Mammary epithelial cell (primary cell): ENCODE measurements at regions of chr20 and their contacts with region 1.

Region 1: DNA sequence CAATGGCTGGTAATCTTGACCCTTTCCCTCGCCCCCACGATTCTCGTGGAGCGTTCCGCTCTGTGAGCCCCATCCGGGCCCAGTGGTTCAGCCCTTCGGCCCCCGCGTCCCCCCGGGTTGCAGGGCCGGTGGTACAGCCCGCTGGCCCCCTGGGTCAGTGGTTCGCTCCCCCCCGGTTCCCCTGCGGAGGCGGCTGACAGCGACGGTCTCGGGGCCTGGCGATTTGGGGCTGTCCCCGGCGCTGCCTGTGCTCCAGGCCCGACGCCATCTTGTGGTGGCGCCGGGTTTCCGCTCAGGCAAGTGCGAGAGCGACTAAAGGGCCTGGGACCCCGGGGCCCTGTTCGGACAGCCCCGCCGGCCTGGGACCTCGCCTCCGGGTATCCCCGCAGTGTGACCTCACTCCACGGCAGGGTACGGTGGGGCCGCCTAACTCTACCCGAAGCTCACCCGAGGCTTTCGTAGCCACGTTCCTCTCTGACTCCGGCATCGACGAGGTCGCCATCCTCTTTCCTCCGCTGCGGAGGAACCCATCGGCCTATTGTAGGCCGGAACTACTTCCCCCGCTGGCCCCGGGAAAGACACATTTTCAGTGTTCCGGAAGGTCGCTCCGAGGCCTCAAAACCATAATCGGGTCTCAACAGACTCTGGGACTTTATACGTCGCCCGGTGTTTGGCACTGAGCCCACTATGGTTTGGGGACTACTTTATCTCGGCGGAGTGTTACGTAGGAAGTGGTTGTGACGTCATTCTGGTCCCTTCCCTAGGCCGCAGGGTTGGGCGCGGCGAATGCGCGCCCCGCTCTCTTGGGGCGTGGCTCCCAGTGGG is at the start of gene ZNF335:
- DNase-seq: peak; percentile 97
- H3K4me3 ChIP-seq: peak within 1 kb of the TSS; percentile 89 to 93 (median 90)
- H3K27ac ChIP-seq: peak within 1 kb of the TSS; percentile 100
- H3K4me1 ChIP-seq: peaks cover 24% of the 10 kb centered on the region
- H3K27me3 ChIP-seq: no peaks in the 10 kb centered on the region
- CTCF ChIP-seq: peak in 1 of 2 donors; percentile 47
- total RNA-seq, gene ZNF335: 13.8 to 21.7 TPM

Region 2: DNA sequence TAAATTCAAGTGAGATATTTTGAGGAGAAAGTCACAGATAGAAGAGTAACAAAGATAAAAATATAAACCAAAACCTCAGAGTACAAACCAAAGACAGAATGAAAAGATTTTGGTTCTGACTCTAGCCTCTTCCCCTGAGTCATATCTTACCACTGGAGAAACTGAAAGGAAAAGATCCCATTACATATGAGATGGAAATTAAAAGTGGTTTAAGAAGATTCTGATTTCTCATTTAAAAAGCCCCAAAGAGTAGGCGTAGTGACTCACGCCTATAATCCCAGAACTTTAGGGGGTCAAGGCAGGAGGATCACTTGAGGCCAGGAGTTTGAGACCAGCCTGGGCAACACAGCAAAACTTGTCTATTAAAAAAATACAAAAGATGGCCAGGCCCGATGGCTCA is 219.1 kb before region 1 on chr20:
- CTCF ChIA-PET with region 1: no interaction called
- dilution Hi-C with region 1: no loop called
- in situ Hi-C with region 1: no loop called
- intact Hi-C with region 1: no loop called
- DNase-seq: peak; percentile 5
- H3K4me3 ChIP-seq: no peak overlapping the region
- H3K27ac ChIP-seq: no peak overlapping the region
- H3K4me1 ChIP-seq: no peaks in the 10 kb centered on the region
- H3K27me3 ChIP-seq: peaks cover 4% of the 10 kb centered on the region
- CTCF ChIP-seq: no peak

Region 3: DNA sequence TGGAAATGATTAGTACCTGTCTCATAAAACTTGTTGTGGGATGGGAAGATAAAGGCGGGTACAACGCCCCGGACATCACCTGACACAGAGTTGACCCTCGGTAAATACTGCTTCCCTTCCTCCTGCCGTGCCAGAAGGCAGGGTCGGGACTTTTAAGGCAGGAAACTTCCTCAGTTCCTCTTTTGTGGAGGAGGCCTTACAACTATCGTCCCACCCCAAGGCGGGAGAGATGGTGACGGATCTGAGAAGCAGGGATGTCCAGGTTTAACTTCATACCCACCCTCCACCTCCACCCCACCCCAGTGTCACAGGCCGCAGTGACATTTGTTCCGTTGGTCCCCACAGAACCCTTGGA is 179.6 kb before region 1 on chr20:
- CTCF ChIA-PET with region 1: no interaction called
- dilution Hi-C with region 1: no loop called
- in situ Hi-C with region 1: no loop called
- intact Hi-C with region 1: no loop called
- DNase-seq: peak; percentile 19
- H3K4me3 ChIP-seq: peak overlapping the region; percentile 71 to 93 (median 92)
- H3K27ac ChIP-seq: peak overlapping the region; percentile 90
- H3K4me1 ChIP-seq: peaks cover 18% of the 10 kb centered on the region
- H3K27me3 ChIP-seq: no peaks in the 10 kb centered on the region
- CTCF ChIP-seq: no peak

Region 4: DNA sequence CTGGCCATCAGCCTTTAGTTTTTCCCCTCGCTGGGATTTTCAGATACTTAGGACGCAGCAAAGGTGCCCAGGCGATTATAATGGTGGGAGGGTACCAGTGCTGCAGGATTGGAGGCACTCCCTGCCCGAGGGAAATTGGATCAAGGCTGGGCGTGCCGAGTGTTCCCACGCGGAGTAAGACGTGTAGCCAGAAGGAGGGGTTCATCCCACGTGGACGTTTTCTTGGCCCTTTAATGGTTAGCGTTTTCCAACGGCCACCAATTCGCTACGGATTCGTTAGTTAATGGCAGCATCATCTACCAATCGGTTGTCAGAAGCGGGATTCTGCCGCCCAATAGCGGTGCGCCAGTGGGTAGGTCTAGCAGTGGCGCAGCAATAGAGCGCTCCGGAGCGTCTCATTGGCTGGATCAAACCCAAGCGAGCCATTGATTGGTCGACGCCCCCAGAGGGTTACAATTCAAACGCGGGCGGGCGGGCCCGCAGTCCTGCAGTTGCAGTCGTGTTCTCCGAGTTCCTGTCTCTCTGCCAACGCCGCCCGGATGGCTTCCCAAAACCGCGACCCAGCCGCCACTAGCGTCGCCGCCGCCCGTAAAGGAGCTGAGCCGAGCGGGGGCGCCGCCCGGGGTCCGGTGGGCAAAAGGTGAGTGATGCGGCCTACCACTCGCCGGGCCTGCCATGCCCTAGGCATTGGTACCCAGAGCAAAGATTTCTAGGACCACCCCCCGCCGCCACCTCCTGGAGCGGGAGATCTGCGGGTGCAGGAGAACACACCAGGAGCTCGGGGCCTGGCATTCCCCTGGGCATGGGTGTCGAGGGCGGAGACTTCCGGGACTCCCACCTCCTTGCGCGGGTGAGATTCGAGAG is 159.5 kb before region 1 on chr20 and contains the start of gene UBE2C:
- CTCF ChIA-PET with region 1: no interaction called
- dilution Hi-C with region 1: no loop called
- in situ Hi-C with region 1: no loop called
- intact Hi-C with region 1: loop called (anchors 1 kb)
- DNase-seq: peak; percentile 100
- H3K4me3 ChIP-seq: peak within 1 kb of the TSS; percentile 74 to 97 (median 94)
- H3K27ac ChIP-seq: peak within 1 kb of the TSS; percentile 79
- H3K4me1 ChIP-seq: peaks cover 13% of the 10 kb centered on the region
- H3K27me3 ChIP-seq: no peaks in the 10 kb centered on the region
- CTCF ChIP-seq: no peak
- total RNA-seq, gene UBE2C: 1.0 to 80.5 TPM

Region 5: DNA sequence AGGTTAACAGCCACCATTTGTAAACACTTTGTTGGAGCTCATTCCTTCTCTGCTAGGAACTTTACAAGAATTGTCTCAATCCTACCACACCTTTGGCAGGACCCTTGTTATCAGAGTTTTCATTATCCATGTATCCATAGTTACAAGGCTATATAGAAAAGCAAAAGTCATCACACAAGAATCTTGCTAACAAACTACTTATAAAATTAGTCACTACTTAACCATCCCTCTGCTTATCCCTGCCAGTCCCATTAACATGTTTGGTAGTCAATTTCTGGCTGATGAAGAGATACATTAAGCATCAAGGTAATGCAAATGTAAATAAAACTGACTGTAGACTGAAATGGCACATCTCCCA is 104.1 kb before region 1 on chr20:
- CTCF ChIA-PET with region 1: no interaction called
- dilution Hi-C with region 1: no loop called
- in situ Hi-C with region 1: no loop called
- intact Hi-C with region 1: no loop called
- DNase-seq: peak; percentile 60
- H3K4me3 ChIP-seq: no peak overlapping the region
- H3K27ac ChIP-seq: peak overlapping the region; percentile 74
- H3K4me1 ChIP-seq: peaks cover 11% of the 10 kb centered on the region
- H3K27me3 ChIP-seq: no peaks in the 10 kb centered on the region
- CTCF ChIP-seq: no peak

Region 6: GRCh38 chr20:45919542-45920399 is 52.1 kb before region 1 on chr20:
- CTCF ChIA-PET with region 1: no interaction called
- dilution Hi-C with region 1: no loop called
- in situ Hi-C with region 1: no loop called
- intact Hi-C with region 1: no loop called
- DNase-seq: no peak
- H3K4me3 ChIP-seq: no peak overlapping the region
- H3K27ac ChIP-seq: no peak overlapping the region
- H3K4me1 ChIP-seq: no peaks in the 10 kb centered on the region
- H3K27me3 ChIP-seq: no peaks in the 10 kb centered on the region
- CTCF ChIP-seq: no peak

Region 7: GRCh38 chr20:45934586-45935415 is 37.1 kb before region 1 on chr20 and contains the start of gene PCIF1:
- CTCF ChIA-PET with region 1: interaction called, 14 read pairs
- dilution Hi-C with region 1: no loop called
- in situ Hi-C with region 1: no loop called
- intact Hi-C with region 1: loop called (anchors 1 kb)
- DNase-seq: peak; percentile 93
- H3K4me3 ChIP-seq: peak within 1 kb of the TSS; percentile 97 to 98 (median 97)
- H3K27ac ChIP-seq: peak within 1 kb of the TSS; percentile 87
- H3K4me1 ChIP-seq: peaks cover 5% of the 10 kb centered on the region
- H3K27me3 ChIP-seq: no peaks in the 10 kb centered on the region
- CTCF ChIP-seq: no peak
- total RNA-seq, gene PCIF1: 12.7 to 18.9 TPM

Region 8: DNA sequence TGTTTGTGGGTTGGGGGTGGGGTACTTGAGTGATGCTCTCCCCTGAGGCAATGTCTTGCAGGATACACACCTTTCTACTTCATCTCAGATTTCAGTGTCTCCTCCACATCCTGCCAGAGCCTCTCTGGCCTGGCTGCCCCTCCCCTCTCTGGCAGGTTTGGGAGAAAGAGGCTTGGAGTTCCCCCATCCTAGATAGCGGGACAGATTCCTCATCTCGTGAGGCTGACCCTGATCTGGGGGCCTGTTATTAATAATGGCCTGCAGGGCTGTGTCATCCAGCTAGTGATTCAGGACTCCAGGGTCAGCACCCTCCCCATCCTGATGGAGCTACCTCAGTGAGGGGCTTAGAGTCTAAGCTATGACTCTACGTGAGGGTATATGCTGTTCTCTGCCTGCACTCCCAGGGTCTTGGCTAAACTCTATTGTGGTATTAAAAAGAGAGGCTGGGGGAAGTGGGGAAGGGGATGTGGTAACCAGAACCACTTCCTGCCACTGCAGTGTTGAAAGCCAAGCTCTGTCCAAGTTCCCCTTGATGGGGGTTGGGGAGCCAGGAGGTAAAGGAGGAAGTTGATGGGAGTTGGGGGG is 33.1 kb after region 1 on chr20:
- CTCF ChIA-PET with region 1: no interaction called
- dilution Hi-C with region 1: loop called (anchors 5 kb)
- in situ Hi-C with region 1: no loop called
- intact Hi-C with region 1: no loop called
- DNase-seq: peak; percentile 86
- H3K4me3 ChIP-seq: no peak overlapping the region
- H3K27ac ChIP-seq: no peak overlapping the region
- H3K4me1 ChIP-seq: peaks cover 23% of the 10 kb centered on the region
- H3K27me3 ChIP-seq: no peaks in the 10 kb centered on the region
- CTCF ChIP-seq: no peak

Region 9: DNA sequence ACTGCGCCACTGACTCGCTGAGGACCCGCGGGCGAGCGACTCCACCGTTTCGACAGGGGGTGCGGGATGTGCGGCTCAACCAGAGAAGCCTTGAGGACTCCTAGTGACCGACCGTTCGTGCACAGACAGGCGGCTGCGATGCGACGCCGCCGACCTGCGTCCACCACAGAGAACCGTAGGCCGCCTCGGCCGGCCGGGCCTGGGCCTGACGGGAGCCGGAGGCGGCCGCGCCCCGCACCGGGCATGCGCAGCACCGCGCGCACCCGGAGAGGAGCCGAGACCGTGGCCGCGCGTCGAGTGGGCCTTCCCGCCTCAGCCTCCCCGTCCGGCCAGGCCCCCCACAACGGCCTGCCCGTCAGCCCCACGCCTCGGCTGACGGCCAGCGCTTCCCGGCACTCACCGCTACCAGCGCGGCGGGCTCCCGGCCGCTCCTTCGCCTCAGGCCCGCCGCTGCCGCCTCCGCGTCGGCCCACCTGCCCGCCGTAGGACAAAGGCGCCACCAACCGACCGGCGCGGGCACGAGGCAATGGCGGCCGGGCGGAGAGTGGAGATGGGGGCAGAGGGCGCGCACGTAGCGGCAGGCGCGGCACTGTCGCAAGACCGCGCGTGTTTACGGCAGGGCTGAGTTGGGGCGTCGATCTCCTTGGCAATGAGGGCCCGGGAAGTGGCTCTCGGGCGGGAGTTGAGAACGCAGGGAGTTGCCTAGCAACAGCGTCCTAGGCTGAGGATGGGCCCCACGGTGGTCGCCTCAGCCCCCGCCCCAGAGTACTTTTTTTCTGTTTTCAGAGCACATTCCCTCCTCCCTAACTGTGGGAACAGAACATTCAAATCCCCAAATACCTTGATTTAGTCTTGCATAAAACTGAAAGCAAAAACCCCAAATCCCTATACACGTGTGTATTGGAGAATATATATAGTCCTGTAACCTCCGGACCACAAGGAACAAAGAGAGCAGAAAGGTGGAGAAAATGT is 117.8 kb after region 1 on chr20 and contains the start of gene NCOA5:
- CTCF ChIA-PET with region 1: no interaction called
- dilution Hi-C with region 1: no loop called
- in situ Hi-C with region 1: no loop called
- intact Hi-C with region 1: loop called (anchors 5 kb)
- DNase-seq: peak; percentile 94
- H3K4me3 ChIP-seq: peak within 1 kb of the TSS; percentile 91 to 94 (median 91)
- H3K27ac ChIP-seq: peak within 1 kb of the TSS; percentile 87
- H3K4me1 ChIP-seq: peaks cover 20% of the 10 kb centered on the region
- H3K27me3 ChIP-seq: no peaks in the 10 kb centered on the region
- CTCF ChIP-seq: peak; percentile 9 to 48
- total RNA-seq, gene NCOA5: 11.2 to 17.8 TPM